ENCODE measurements at regions of chr19 and their contacts with region 1.

Region 1: DNA sequence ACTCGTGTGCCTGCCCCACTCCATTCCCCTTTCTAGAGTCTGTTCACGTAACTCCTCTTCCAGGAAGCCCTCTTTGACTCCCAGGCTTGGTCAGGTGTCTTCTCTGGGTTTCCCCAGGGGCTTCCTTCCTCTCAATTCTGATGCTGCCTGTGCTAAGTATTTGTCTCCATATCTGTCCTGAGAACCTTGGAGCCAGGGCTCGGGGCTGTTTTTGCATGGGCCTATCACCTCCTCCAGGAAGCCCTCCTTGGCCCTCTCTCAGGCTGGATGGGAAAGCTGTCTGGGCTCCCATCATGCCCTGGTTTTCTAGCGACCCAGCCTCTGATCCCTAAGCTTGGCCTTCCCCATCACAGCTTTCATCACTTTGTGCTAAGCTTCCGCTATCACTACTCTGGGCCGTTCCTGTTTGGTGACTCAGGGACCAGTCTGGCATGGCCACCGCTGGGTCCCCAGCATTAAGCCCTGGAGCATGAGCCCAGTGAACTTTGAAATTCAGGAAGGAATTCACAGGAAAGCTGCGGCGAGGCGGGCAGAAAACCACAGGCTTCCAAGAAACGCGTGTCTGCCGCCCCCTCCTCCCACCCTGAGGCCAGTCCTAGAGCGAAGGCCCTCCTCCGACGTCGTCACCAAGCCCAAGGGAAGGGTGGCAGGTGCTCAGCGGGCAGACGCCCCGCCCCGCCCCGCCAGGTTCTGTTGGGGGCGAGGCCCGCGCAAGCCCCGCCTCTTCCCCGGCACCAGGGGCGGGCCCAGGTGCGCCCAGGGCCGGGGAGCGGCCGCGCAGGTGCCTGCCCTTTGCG is 486 bp upstream of the SPINT2 start:
- DNase-seq: peak; percentile 90
- ATAC-seq: peak; percentile 87
- H3K4me3 Mint-ChIP-seq: peak overlapping the region; percentile 83
- H3K27ac Mint-ChIP-seq: peak overlapping the region; percentile 94
- H3K4me1 Mint-ChIP-seq: peaks cover 34% of the 10 kb centered on the region
- H3K27me3 Mint-ChIP-seq: no peaks in the 10 kb centered on the region

Region 2: DNA sequence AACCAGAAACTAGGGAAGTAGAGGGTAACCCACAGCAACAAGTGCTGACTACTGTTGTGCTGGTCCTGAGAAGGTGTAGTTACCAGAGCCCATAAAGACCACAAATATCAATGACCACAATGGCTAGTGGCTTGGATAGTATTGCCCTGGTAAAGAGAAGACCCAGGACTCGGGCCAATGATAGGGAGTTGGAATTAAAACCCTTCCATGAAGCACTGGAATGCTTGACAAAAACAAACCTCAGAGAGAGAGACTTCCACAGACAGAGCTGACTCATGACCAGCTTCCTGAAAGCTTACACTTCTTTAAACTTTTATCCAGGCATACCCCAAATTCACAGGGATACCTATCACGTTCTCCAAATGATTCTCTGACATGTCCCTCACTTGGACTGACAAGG is 418.0 kb before region 1 on chr19:
- CTCF ChIA-PET with region 1: no interaction called
- POLR2A ChIA-PET with region 1: no interaction called
- intact Hi-C with region 1: no loop called
- DNase-seq: no peak
- ATAC-seq: no peak
- H3K4me3 Mint-ChIP-seq: no peak overlapping the region
- H3K27ac Mint-ChIP-seq: no peak overlapping the region
- H3K4me1 Mint-ChIP-seq: no peaks in the 10 kb centered on the region
- H3K27me3 Mint-ChIP-seq: no peaks in the 10 kb centered on the region

Region 3: DNA sequence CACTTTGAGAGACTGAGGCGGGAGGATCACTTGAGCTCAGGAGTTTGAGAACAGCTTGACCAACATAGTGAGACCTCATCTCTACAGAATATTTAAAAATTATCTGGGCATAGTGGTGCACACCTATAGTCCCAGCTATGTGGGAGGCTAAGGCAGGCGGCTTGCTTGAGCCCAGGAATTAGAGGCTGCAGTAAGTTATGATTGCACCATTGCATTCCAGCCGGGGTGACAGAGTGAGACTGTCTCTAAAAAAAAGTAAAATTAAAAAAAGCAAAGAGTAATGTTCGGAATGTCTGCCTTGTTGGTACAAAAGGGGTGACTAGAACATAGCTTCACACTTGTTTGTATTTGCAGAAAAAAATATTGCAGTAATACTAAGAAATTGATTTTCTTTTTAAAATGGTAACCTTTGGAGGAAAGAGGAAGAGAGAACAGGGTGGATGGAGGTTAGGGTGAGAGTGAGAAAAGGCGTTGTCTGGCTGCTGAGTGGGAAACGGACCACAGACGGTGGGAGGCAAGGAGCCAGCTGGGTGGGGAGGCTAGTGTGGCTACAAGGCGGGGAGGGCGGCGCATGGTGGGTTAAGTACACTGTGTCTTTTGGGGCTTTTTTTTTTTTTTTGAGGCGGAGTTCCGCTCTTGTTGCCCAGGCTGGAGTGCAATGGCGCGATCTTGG is 17.9 kb before region 1 on chr19:
- CTCF ChIA-PET with region 1: interaction called, 12 read pairs
- POLR2A ChIA-PET with region 1: no interaction called
- intact Hi-C with region 1: no loop called
- DNase-seq: no peak
- ATAC-seq: no peak
- H3K4me3 Mint-ChIP-seq: no peak overlapping the region
- H3K27ac Mint-ChIP-seq: no peak overlapping the region
- H3K4me1 Mint-ChIP-seq: peaks cover 3% of the 10 kb centered on the region
- H3K27me3 Mint-ChIP-seq: peaks cover 2% of the 10 kb centered on the region

Region 4: GRCh38 chr19:38277969-38278680 is 14.2 kb after region 1 on chr19:
- CTCF ChIA-PET with region 1: interaction called, 10 read pairs
- POLR2A ChIA-PET with region 1: interaction called, 4 read pairs
- intact Hi-C with region 1: no loop called
- DNase-seq: no peak
- ATAC-seq: no peak
- H3K4me3 Mint-ChIP-seq: no peak overlapping the region
- H3K27ac Mint-ChIP-seq: no peak overlapping the region
- H3K4me1 Mint-ChIP-seq: peaks cover 13% of the 10 kb centered on the region
- H3K27me3 Mint-ChIP-seq: no peaks in the 10 kb centered on the region

Region 5: DNA sequence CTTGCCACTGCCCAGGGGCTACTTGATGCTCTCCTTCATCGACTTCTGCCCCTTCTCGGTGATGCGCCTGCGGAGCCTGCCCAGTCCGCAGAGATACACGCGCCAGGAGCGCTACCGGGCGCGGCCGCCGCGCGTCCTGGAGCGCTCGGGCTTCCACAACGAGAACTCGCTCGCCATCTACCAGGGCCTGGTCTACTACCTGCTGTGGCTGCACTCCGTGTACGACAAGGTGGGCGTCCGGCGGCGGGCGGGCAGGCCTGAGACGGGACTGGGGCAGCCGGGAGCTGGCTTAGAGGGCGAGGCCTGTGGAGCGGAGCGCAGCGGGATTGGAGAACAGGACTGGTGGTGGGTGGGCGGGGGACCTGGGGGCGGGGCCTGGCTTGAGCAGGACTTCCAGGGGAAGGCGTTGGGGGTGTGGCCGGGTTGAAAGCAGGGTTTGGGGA is 97.8 kb after region 1 on chr19:
- CTCF ChIA-PET with region 1: no interaction called
- POLR2A ChIA-PET with region 1: no interaction called
- intact Hi-C with region 1: loop called in 1 of 2 experiments (anchors 1 kb)
- DNase-seq: peak; percentile 87
- ATAC-seq: peak; percentile 78
- H3K4me3 Mint-ChIP-seq: peak overlapping the region; percentile 76
- H3K27ac Mint-ChIP-seq: no peak overlapping the region
- H3K4me1 Mint-ChIP-seq: peaks cover 9% of the 10 kb centered on the region
- H3K27me3 Mint-ChIP-seq: peaks cover 22% of the 10 kb centered on the region

Region 6: DNA sequence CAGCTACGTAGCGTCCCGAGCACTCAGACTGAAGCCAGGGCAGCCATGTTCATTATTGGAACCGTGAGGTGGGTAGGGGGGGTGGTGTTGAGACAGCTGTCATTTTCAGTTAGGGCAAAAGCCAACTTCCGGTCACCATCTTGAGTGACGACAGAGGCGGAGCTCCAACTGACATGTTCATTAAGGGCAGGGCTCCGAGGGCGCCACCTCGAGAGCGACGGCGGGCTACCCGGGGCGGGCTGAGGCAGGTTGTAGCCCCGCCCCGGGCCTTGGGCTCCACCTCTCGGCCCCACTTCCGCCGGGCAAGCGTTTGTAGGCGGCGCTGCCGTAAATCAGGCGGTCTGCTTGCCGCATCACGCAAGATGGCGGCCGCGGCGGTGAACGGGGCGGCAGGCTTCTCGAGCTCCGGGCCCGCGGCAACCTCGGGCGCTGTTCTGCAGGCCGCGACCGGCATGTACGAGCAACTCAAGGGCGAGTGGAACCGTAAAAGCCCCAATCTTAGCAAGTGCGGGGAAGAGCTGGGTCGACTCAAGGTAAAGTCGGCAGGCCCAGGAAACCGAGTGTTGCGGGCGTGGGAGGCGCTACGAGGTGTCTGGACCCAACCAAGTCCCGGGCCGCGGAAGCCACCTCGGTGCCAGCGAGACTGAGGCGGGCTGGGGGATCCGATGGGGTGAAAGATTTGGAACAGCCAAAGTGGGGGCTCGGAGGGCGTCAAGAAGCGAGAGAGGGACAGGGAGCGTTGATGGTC is 110.7 kb after region 1 on chr19 and contains the start of gene PSMD8:
- CTCF ChIA-PET with region 1: interaction called, 5 read pairs
- POLR2A ChIA-PET with region 1: interaction called, 3 read pairs
- intact Hi-C with region 1: loop called in 1 of 2 experiments (anchors 1 kb)
- DNase-seq: peak; percentile 99
- ATAC-seq: peak; percentile 99
- H3K4me3 Mint-ChIP-seq: peak within 1 kb of the TSS; percentile 97
- H3K27ac Mint-ChIP-seq: peak within 1 kb of the TSS; percentile 98
- H3K4me1 Mint-ChIP-seq: peaks cover 26% of the 10 kb centered on the region
- H3K27me3 Mint-ChIP-seq: peaks cover 5% of the 10 kb centered on the region
- total RNA-seq, gene PSMD8: 219 to 275 TPM

Region 7: DNA sequence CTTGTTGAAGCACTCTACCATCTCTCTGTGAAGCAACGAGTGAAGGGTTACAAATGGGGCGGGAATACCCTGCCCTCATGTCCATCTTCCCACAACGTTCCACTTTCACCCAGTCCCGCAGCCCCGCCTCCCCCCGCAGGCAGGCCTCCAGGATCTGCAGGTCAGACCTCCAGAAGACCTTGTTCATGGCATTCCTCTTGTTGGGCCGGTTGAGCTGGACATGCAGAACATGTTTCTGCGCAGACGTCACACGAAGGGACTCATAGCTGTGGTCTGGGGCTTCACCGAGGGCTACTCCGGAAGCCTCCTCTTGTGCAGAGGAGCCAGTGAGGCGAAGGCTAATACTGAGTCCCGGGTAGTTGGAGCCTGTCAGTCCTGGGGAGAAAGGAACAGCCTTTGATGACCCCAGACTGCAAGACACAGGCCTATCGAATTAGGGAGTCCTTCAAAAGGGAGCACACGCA is 567.3 kb after region 1 on chr19:
- CTCF ChIA-PET with region 1: no interaction called
- POLR2A ChIA-PET with region 1: no interaction called
- intact Hi-C with region 1: loop called in 1 of 2 experiments (anchors 5 kb)
- DNase-seq: peak; percentile 58
- ATAC-seq: peak; percentile 53
- H3K4me3 Mint-ChIP-seq: peak overlapping the region; percentile 87
- H3K27ac Mint-ChIP-seq: peak overlapping the region; percentile 83
- H3K4me1 Mint-ChIP-seq: peaks cover 25% of the 10 kb centered on the region
- H3K27me3 Mint-ChIP-seq: no peaks in the 10 kb centered on the region

Measured in activated CD4-positive, alpha-beta T cell treated with anti-CD3 and anti-CD28 coated beads for 36 hours (primary cell).